MCF 10A (cell line): ENCODE measurements at regions of chr19 and their contacts with region 1.

Region 1: GRCh38 chr19:13033819-13034611 is 38.7 kb downstream of the NFIX start:
- DNase-seq: peak; percentile 77
- H3K4me3 Mint-ChIP-seq: no peak overlapping the region
- H3K27ac Mint-ChIP-seq: no peak overlapping the region
- H3K4me1 Mint-ChIP-seq: peaks cover 37% of the 10 kb centered on the region
- H3K27me3 Mint-ChIP-seq: no peaks in the 10 kb centered on the region
- CTCF ChIP-seq: peak; percentile 68

Region 2: DNA sequence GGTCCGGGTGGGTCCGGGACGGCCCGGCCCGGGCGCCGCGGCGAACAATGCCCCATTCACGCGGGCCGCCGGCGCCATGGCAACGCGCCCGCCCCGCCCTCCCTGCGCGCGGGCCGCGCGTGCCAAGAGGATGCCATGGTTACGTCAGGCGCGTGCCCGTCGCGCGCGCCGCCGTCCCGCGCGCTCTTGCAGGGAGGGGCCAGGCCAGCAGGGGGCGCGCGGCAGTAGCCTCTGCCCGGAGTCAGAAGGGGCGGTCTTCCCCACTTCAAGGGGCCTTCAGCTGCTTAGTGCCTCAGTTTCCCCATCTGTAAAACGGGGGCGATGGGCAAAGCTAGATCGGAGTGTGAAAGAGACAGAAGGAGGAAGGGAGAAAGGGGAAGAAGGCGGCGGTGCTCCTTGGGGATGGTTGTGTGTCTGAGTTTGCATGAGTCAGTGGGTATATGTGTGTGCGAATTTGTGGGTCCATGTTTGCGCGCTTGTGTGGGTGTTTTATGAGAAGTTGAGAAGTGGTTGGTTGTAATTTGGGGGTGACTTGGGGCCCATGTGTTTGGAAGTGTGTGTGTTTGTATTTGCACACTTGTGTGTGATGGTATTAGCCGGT is 50.4 kb before region 1 on chr19:
- CTCF ChIA-PET with region 1: interaction called, 6 read pairs
- POLR2A ChIA-PET with region 1: interaction called, 3 read pairs
- intact Hi-C with region 1: loop called (anchors 2 kb)
- DNase-seq: peak; percentile 74
- H3K4me3 Mint-ChIP-seq: no peak overlapping the region
- H3K27ac Mint-ChIP-seq: no peak overlapping the region
- H3K4me1 Mint-ChIP-seq: peaks cover 6% of the 10 kb centered on the region
- H3K27me3 Mint-ChIP-seq: no peaks in the 10 kb centered on the region
- CTCF ChIP-seq: peak; percentile 94

Region 3: GRCh38 chr19:13012690-13013608 is 21.1 kb before region 1 on chr19:
- CTCF ChIA-PET with region 1: interaction called, 10 read pairs
- POLR2A ChIA-PET with region 1: interaction called, 5 read pairs
- intact Hi-C with region 1: no loop called
- DNase-seq: peak; percentile 68
- H3K4me3 Mint-ChIP-seq: peak overlapping the region; percentile 71
- H3K27ac Mint-ChIP-seq: peak overlapping the region; percentile 89
- H3K4me1 Mint-ChIP-seq: peaks cover 38% of the 10 kb centered on the region
- H3K27me3 Mint-ChIP-seq: no peaks in the 10 kb centered on the region
- CTCF ChIP-seq: no peak

Region 4: DNA sequence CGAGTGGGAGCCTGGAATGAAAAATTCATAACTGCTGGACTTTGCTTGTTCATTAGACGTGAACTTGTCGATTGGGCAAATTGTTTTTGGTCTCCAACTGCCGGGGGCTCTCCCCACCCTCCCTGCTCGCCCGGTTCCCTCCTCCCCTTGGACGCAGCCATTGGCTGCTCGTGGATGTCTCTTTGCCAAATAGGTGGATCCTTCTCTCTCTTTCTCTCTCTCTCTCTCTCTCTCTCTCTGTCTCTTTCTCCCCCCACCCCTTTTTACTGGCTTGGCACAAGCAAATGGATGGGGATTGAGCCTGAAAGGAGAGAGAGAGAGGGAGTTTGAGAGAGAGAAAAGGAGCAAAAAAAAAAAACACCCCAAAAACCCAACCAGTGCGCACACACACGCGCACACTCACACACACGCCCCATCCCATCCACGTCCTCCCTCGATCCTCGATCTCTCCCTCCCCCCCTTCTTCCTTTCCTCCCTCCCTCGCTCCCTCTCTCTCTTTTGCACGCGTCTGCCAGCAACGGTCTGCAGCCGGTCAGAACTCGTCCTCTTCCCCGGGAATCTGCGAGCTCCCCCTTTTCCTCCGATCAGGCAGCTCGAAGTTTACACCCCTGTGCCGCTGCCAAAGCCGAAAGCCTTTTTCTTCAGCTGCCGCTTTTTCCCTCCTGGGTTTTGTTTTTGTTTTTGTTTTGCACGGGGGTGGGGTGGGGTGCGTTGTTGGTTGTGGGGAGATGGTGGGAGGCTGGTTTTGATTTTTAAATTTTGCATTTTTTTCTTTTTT is 11.0 kb before region 1 on chr19:
- CTCF ChIA-PET with region 1: interaction called, 8 read pairs
- POLR2A ChIA-PET with region 1: interaction called, 10 read pairs
- intact Hi-C with region 1: no loop called
- DNase-seq: peak; percentile 94
- H3K4me3 Mint-ChIP-seq: peak overlapping the region; percentile 69
- H3K27ac Mint-ChIP-seq: peak overlapping the region; percentile 69
- H3K4me1 Mint-ChIP-seq: peaks cover 48% of the 10 kb centered on the region
- H3K27me3 Mint-ChIP-seq: no peaks in the 10 kb centered on the region
- CTCF ChIP-seq: no peak

Region 5: GRCh38 chr19:13104360-13104847 is 70.4 kb after region 1 on chr19:
- CTCF ChIA-PET with region 1: no interaction called
- POLR2A ChIA-PET with region 1: no interaction called
- intact Hi-C with region 1: no loop called
- DNase-seq: no peak
- H3K4me3 Mint-ChIP-seq: no peak overlapping the region
- H3K27ac Mint-ChIP-seq: no peak overlapping the region
- H3K4me1 Mint-ChIP-seq: no peaks in the 10 kb centered on the region
- H3K27me3 Mint-ChIP-seq: no peaks in the 10 kb centered on the region
- CTCF ChIP-seq: no peak